ENCODE measurements at regions of chr9 and their contacts with region 1.

Region 1: DNA sequence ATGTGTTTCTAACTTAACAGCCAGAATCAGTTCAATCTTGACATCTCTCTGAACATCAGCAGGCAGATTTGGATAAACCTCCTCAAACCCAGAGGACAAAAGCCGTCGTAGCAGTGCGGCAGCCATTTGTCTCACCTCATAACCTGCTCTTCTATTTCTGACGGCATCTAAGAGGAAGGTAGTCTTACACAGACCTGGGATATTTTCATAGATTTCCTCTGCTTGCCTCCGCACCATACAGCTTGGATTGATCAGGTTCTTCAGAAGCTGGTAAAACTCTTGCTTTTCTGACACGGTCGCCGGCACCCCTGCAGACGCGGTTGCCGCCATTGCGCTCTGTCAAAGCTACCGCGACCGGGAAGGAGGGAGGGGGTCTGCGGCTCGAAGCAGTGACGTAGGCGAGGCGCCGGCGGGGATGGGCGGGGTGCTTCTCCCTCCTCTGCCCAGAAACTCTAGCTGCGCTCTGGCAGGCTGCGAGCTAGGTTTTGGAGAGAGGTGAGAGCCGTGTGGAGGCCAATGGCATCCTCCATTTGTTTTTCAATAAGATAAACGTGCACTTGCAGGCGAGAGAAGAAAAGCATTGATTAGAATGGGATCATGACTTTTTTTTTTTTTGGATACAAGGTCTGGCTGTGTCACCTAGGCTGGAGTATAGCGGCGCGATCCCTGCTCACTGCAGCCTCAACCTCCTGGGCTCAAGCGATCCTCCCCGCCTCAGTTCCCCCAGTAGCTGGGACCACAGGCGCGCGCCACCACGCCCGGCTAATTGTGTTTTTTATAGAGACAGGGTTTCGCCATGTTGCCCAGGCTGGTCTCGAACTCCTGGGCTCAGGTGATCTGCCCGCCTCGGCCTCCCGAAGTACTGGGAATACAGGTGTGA is at the start of gene RANBP6:
- DNase-seq: no peak
- H3K4me3 ChIP-seq: peak within 1 kb of the TSS; percentile 72
- H3K27me3 ChIP-seq: no peaks in the 10 kb centered on the region
- CTCF ChIP-seq: no peak
- polyA plus RNA-seq, gene RANBP6: 4.9 and 10.7 TPM in 2 replicates

Region 2: DNA sequence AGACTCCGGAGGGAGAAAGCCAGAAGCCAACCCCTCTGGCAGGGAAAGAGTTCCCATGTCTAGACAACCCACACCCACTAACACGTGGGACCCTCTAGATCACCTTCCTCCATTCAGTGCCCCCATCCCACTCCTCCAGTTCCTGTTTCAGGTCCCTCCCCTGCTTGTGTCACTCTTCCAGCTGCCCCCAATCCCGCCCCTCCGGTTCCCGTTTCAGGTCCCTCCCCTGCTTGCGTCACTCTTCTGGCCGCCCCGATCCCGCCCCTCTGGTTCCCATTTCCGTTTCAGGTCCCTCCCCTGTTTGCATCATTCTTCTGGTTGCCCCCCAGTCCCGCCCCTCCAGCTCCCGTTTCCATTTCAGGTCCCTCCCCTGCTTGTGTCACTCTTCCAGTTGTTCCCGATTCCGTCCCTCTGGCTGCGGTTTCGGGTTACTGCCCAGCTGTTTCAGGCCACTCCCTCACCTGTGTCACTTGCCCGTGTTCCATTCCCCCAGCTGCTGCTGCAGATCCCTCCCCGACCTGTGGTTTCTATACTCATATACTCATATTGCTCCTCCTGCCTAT is 64.7 kb after region 1 on chr9:
- CTCF ChIA-PET with region 1: interaction called, 3 read pairs
- POLR2A ChIA-PET with region 1: interaction called, 25 read pairs
- DNase-seq: peak; percentile 68
- H3K4me3 ChIP-seq: peak overlapping the region; percentile 54
- H3K27me3 ChIP-seq: no peaks in the 10 kb centered on the region
- CTCF ChIP-seq: no peak; the same call in 1 of the 2 replicates